Activated naive CD4-positive, alpha-beta T cell treated with anti-CD3 and anti-CD28 coated beads for 36 hours (primary cell): ENCODE measurements at regions of chr9 and their contacts with region 1.

Region 1: DNA sequence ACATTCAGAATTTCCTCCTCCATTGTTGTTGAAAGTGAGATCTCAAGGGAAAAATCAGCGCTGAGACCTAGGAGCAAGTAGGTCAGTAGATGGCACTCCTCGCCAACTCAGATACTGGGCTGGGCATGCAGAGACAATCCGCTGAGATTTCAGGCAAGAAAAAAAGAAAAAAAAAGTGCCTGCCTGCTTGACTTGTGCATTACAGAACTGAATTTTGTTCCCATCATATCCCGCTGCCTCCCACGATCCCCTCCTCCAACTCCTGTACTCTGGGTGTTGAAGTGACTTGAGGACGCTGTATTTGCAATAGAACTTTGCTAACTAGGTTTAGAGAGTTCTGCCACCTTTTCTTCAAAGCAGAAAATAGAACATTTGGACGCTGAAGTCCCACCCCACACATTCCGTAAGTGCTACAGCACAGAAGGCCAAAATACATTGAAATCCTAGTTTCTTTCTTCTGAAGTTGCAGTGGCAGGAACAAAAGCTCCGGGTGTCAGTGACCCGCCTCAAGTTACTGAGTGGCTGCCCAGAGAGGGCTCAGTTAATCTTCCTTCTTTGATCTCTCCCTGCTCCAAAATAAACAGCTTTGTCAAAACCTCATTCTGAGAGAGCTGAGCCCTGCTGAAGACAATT is 265.8 kb downstream of the MLLT3 start:
- DNase-seq: peak; percentile 85
- H3K4me3 Mint-ChIP-seq: no peak overlapping the region
- H3K27ac Mint-ChIP-seq: peak overlapping the region; percentile 46
- H3K4me1 Mint-ChIP-seq: peaks cover 72% of the 10 kb centered on the region
- H3K27me3 Mint-ChIP-seq: no peaks in the 10 kb centered on the region

Region 2: DNA sequence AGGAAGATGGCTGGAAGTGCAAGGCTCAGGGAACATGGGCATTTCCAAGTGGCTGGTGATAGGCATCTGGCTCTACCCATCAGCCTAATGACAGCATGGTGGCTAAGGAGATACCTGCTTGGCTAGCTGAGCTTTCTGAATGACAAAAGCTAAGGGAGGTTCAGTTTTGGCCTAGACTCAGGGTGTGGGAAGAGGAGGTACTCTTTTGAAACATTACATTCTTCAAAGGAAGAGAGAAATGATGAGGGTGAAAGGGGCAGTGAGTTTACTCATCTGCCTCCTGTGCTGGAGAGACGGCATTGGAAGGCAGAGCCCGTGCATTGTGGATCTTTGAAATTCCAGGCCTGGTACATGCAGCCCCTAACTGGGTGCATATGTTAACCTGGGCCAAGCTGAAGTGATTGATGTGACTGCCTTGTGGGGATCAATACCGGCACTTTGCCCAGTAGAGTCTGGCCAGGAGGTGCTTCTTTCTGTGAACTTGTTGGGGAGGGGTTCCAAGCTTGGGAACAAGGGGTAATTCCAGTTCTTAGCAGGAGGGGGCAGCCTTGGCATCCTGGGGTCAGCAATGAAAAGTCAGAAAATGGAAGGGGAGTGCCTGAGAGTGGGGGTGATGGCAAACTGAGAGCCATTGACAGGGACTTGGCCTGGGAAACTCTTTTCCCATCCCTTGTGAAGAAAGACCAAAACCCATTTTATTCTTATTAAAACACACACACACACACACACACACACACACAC is 839.1 kb before region 1 on chr9:
- CTCF ChIA-PET with region 1: no interaction called
- intact Hi-C with region 1: loop called (anchors 5 kb)
- DNase-seq: peak; percentile 21
- H3K4me3 Mint-ChIP-seq: no peak overlapping the region
- H3K27ac Mint-ChIP-seq: peak overlapping the region; percentile 15
- H3K4me1 Mint-ChIP-seq: peaks cover 31% of the 10 kb centered on the region
- H3K27me3 Mint-ChIP-seq: peaks cover 11% of the 10 kb centered on the region

Region 3: GRCh38 chr9:20178197-20178596 is 178.3 kb before region 1 on chr9:
- CTCF ChIA-PET with region 1: no interaction called
- intact Hi-C with region 1: no loop called
- DNase-seq: no peak
- H3K4me3 Mint-ChIP-seq: no peak overlapping the region
- H3K27ac Mint-ChIP-seq: no peak overlapping the region
- H3K4me1 Mint-ChIP-seq: peaks cover 5% of the 10 kb centered on the region
- H3K27me3 Mint-ChIP-seq: no peaks in the 10 kb centered on the region

Region 4: DNA sequence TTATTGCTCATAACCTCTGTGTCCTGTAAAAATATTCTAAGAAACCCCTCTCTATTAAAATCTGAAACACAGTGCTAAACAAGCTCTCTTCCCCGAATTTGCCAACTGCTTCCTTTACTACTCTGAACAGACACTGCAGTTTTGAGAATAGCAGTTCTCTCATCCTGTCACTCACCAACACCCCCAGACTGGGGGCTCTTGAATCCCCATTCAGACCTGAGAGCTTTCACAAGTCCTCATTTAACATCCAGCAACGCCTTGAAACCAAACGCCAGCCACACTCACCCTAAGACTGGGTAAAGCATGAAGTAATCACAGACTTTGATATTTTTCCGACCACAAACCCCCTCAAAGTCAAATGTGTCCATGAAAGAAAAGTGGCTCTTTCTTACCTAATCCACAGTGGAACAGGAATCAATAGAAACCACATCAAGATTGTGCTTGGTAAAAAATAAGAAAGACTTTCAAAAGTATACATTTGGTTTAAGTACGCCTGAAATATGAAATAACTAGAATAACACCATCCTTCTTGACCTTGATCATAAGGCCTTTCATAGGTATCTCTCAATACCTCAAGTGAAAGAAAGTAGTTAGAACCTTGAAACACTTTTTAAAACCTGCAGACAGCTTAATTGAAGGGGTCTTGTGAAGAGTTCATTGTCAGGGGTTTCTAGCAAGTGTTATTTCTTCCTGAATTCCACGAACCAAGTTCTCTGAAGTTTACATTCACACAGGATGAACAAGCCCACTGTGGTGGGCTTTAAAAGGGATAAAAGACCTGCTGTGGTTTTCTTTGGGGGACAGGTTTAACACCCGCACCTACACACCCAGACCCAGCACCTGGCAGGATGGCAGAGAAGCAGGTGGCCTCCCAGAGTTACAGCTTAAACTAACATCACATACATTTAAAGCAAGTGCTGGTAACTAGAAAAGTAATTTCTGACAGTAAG is 146.9 kb before region 1 on chr9:
- CTCF ChIA-PET with region 1: no interaction called
- intact Hi-C with region 1: loop called (anchors 1 kb)
- DNase-seq: peak; percentile 56
- H3K4me3 Mint-ChIP-seq: no peak overlapping the region
- H3K27ac Mint-ChIP-seq: peak overlapping the region; percentile 70
- H3K4me1 Mint-ChIP-seq: peaks cover 31% of the 10 kb centered on the region
- H3K27me3 Mint-ChIP-seq: no peaks in the 10 kb centered on the region

Region 5: DNA sequence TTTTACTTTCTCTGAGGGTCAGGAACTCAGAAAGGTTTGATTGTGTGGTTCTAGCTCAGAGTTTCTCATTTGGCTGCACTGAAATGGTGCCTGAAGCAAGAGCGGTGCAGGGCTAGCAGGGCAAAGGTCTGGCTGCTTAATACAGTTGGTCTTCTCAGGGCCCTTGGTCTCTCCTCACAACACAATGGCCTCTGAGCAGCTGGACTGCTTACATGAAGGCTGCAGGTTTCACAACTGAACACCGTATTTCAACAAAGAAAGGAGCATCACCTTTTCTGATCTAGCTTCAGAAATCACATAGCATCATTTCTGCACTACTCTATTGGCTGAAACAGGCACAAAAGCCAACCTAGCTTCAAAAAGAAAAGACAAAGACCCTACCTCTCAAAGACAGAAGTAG is 143.6 kb after region 1 on chr9:
- CTCF ChIA-PET with region 1: no interaction called
- intact Hi-C with region 1: no loop called
- DNase-seq: no peak
- H3K4me3 Mint-ChIP-seq: no peak overlapping the region
- H3K27ac Mint-ChIP-seq: no peak overlapping the region
- H3K4me1 Mint-ChIP-seq: peaks cover 56% of the 10 kb centered on the region
- H3K27me3 Mint-ChIP-seq: no peaks in the 10 kb centered on the region

Region 6: DNA sequence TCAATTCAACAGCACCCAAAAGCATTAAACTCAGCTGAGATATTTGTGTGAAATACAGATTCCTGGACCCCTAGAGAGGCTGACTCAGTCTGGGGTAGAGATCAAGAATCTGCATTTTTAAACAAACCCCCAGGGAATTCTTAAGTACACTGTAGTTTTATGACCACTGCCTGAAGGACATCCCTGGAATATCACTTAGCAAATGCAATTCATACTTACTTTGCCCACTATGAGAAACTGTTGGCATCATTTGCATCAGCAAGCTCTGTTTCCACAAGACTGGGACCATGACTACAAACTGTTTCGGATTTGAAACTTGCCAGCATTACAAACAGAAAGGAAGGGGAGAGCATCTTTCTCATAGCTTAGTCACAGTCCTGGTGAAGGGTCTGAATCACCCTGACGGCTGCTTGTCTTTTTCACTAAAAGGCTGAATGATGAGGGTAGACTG is 202.1 kb after region 1 on chr9:
- CTCF ChIA-PET with region 1: interaction called, 3 read pairs
- intact Hi-C with region 1: loop called (anchors 2 kb)
- DNase-seq: peak; percentile 70
- H3K4me3 Mint-ChIP-seq: peak overlapping the region; percentile 36
- H3K27ac Mint-ChIP-seq: peak overlapping the region; percentile 59
- H3K4me1 Mint-ChIP-seq: peaks cover 86% of the 10 kb centered on the region
- H3K27me3 Mint-ChIP-seq: no peaks in the 10 kb centered on the region

Region 7: GRCh38 chr9:20941174-20941690 is 584.7 kb after region 1 on chr9:
- CTCF ChIA-PET with region 1: interaction called, 14 read pairs
- intact Hi-C with region 1: loop called (anchors 1 kb)
- DNase-seq: peak; percentile 63
- H3K4me3 Mint-ChIP-seq: no peak overlapping the region
- H3K27ac Mint-ChIP-seq: no peak overlapping the region
- H3K4me1 Mint-ChIP-seq: peaks cover 3% of the 10 kb centered on the region
- H3K27me3 Mint-ChIP-seq: no peaks in the 10 kb centered on the region

Region 8: GRCh38 chr9:21110708-21111576 is 754.4 kb after region 1 on chr9:
- CTCF ChIA-PET with region 1: interaction called, 13 read pairs
- intact Hi-C with region 1: loop called (anchors 1 kb)
- DNase-seq: peak; percentile 20
- H3K4me3 Mint-ChIP-seq: no peak overlapping the region
- H3K27ac Mint-ChIP-seq: no peak overlapping the region
- H3K4me1 Mint-ChIP-seq: no peaks in the 10 kb centered on the region
- H3K27me3 Mint-ChIP-seq: no peaks in the 10 kb centered on the region